Tibial artery (tissue), 4 donors: ENCODE measurements at regions of chr7 and their contacts with region 1.

Region 1: DNA sequence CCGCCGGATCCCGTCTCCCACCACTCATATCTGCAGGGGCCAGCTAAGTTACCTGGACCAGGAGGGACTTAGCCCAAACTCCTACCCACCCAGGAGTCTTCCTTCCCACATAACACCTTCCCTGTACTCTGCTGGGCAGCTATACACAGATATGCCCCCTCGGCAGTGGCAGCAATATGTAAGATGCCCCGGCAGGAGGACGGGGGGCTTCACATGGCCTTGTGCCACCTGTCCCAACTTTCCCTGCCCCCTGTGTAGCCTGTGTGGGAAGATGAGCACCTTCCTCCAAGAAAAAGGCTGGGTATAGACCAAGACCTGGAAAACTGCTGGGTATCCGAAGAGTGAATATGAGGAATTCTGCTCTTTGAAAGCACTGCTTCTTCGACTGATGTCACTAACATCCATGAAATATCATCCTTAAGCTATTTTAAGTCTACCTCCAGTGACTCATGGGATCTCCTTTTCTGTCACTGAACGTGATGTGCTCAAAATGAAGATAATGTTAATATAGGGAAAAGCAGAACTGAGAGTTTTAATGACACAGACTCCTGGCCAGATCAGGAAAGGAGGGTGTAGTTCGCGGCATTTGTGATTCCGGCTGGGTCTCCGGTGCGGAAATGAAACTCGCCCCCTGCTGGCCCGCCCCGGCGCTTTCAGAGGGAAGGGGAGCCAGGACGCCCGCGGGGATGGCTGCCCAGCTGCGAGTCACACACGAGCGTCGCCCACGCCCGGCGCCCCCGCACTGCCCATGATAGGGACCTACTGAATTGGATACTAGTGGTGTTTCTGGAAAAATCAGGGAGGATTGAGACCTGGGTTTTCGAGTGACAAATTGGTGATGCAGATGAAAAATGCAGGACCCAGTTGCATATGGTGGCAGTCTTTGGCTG is 256.9 kb upstream of the NFE2L3 start:
- DNase-seq: peak; percentile 63 to 79
- H3K4me3 ChIP-seq: peak overlapping the region in 1 of 2 donors; percentile 35
- H3K27ac ChIP-seq: no peak overlapping the region
- H3K4me1 ChIP-seq: peaks cover 0 to 14% (median 8%) of the 10 kb centered on the region in 4 donors
- H3K27me3 ChIP-seq: peaks cover 0 to 37% of the 10 kb centered on the region in 2 donors
- CTCF ChIP-seq: peak; percentile 50 to 57

Region 2: DNA sequence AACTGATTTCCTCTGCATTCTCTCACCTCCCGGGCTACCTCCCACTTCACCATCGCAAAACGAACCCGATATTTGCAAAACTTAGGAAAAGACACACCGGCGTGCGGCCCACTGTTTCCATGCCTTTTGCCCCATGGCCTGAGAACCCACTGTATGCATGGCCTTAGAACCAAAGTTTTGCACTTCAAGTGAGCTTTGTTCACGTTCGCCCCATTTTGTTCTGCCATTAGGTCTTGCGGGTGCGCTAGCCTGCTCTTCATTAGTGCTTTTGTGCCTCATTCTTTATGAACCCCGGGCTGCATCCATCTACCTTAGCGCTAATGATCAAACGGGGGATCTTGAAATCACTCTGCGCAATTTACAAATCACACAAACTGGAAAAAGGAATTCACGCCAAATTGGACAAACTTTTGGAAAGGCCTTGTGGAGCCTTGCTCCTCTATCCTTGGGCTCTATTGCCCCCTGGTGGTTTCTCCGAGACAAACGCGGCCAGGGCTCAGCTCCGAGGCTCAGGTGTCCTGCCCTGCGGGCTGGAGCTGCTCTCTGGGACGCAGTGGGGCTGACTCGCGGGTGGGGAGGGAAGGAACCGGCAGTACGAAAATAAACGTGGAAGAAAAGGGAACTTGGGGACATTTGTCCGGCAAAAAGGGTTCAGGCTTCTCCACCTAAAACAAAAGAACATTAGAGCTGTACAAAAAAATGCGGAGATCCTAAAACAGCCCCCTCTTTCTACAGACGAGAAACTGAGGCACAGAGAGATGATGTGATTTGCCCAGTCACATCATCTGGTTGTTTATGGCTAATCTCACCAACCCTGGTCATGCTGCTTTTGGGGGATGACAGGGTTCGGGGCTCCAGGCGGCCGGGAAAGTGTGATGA is 43.6 kb before region 1 on chr7:
- intact Hi-C with region 1: no loop called
- DNase-seq: peak; percentile 90 to 95
- H3K4me3 ChIP-seq: peak overlapping the region; percentile 29 to 33
- H3K27ac ChIP-seq: peak overlapping the region; percentile 83 to 93
- H3K4me1 ChIP-seq: peaks cover 4 to 84% (median 51%) of the 10 kb centered on the region in 4 donors
- H3K27me3 ChIP-seq: no peaks in the 10 kb centered on the region
- CTCF ChIP-seq: peak; percentile 86 to 94

Region 3: GRCh38 chr7:25951031-25951948 is 56.1 kb after region 1 on chr7:
- intact Hi-C with region 1: loop called (anchors 5 kb)
- DNase-seq: peak; percentile 88 to 90
- H3K4me3 ChIP-seq: peak overlapping the region; percentile 51 to 85
- H3K27ac ChIP-seq: peak overlapping the region; percentile 24 to 62
- H3K4me1 ChIP-seq: peaks cover 0 to 26% (median 18%) of the 10 kb centered on the region in 4 donors
- H3K27me3 ChIP-seq: peaks cover 0 to 5% of the 10 kb centered on the region in 2 donors
- CTCF ChIP-seq: no peak

Region 4: DNA sequence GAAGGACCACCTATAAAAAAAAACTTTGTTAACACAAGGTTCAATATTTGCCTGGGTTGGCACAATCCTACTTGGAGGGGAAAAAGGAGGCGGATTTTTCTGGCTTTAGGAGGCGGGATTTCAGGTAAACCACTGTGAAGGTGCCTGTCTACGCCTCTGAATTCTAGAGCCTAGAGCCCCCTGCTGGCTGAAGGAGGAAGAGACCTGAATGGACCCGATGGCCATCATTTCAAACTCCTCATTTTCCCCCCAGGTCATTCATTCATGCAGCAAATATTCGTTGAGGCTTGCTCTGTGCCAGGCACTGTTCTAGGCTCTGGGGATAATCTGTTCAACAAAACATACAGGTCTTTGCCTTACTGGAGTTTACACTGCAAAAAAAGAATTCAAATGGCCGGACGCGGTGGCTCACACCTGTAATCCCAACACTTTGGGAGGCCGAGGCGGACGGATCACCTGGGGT is 166.6 kb after region 1 on chr7:
- intact Hi-C with region 1: loop called (anchors 10 kb)
- DNase-seq: peak in 1 of 2 donors; percentile 59
- H3K4me3 ChIP-seq: no peak overlapping the region
- H3K27ac ChIP-seq: no peak overlapping the region
- H3K4me1 ChIP-seq: no peaks in the 10 kb centered on the region
- H3K27me3 ChIP-seq: peaks cover 0 to 4% of the 10 kb centered on the region in 2 donors
- CTCF ChIP-seq: peak; percentile 57 to 71